Motor neuron (in vitro differentiated cells): ENCODE measurements at regions of chr1 and their contacts with region 1.

Region 1: DNA sequence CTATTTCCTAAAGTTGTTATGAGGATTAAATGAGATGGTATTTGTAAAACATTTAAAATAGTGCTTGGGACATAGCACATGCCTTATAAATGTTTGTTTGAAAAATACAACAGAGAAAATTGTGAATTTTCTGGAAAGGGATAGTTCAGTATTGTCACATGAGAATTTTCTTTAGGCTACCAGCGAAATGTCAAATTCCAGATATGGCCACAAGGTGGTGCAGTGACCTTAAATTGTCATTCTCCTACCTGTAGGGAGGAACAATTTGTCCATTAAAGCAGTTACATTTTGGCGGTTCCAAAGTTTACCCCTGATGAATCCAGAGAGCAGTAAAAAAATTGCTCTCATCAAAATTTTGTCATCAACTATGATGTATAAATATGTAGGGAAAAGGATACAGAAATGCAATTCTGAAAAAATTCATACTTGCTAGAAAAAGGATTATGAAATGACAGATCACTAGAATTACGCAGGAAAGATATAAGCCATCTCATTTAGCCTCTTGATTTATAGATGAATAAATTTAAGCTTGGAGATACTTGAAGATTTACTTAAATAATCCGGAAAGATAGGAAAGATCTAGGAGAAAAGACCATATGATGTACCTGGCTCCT is 50.2 kb upstream of the TSHB start:
- ATAC-seq: peak in 3 of 8 experiments; percentile 21 to 45 (median 35)
- H3K4me3 ChIP-seq: no peak overlapping the region
- H3K27ac ChIP-seq: no peak overlapping the region
- H3K4me1 ChIP-seq: no peaks in the 10 kb centered on the region

Region 2: DNA sequence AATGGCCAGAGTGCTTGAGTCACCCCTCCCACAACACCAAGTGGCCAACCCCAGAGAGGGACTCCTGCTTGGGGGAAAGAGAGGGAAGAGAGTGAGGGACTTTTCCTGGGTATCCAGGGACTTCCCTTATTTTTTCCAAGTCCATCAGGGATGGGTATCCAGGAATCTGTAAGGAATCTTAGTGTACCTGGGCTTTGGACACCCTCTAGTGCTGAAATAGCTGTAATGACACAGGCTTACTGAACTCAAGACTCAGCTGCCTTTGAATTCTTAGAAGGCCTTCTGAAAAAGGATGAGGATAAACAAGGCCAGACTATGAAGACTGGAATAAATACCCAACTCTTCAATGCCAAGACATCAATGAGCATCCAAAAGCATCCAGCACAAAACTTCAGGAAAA is 62.3 kb after region 1 on chr1:
- in situ Hi-C with region 1: loop called in 1 of 9 experiments (anchors 5 kb)
- ATAC-seq: peak in 3 of 8 experiments; percentile 68 to 81 (median 77)
- H3K4me3 ChIP-seq: no peak overlapping the region
- H3K27ac ChIP-seq: no peak overlapping the region
- H3K4me1 ChIP-seq: no peaks in the 10 kb centered on the region

Region 3: GRCh38 chr1:115098979-115099692 is 119.8 kb after region 1 on chr1:
- in situ Hi-C with region 1: loop called in 6 of 9 experiments (anchors 25 kb)
- ATAC-seq: peak in 5 of 8 experiments; percentile 39 to 99 (median 76)
- H3K4me3 ChIP-seq: peak overlapping the region in 1 of 5 donors; percentile 19
- H3K27ac ChIP-seq: no peak overlapping the region
- H3K4me1 ChIP-seq: peaks cover 0 to 7% of the 10 kb centered on the region in 2 donors

Region 4: DNA sequence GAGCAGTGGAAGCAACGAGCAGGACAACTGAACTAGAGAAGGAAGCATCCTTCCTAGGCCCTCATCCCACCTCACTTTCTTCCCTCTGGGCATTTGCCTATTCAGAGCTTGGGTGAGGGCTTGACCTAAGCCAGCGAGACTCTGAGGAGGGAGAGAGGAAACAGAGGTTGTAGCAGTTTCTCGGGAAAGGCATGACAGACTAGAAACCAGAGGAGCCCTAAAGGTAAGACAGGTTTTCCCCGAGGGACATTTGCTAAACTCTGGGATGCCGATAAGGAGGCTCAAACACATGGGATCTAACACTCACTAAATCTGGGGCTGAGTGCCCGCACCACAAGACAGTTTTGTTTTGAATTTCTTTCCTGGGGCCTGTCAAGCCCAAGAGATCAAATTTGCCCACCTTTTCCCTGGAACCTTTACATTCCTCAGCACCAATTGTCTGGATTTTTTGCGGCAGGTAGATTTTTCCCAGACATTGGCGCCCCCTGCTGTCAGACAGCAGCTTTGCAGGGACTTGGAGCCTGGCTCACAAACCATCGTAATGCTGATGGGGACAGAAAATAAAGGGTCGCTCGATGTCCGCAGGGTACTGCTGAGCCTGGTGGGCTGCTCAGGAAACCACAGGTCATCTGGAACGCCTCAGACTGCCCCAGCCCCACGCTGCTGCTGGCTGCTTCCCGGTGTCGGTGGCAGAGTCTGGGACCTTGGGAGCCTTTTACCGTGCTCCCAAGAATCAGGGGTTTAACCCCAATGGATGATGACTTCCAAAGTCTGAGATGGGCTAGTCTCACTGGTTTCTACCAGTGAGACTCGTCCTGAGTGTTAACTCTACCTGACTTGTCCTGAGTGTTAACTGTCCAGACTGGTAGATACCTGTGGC is 133.4 kb after region 1 on chr1:
- in situ Hi-C with region 1: loop called in 6 of 9 experiments (anchors 10 to 25 kb)
- ATAC-seq: peak in 6 of 8 experiments; percentile 25 to 71 (median 49)
- H3K4me3 ChIP-seq: no peak overlapping the region
- H3K27ac ChIP-seq: no peak overlapping the region
- H3K4me1 ChIP-seq: no peaks in the 10 kb centered on the region

Region 5: DNA sequence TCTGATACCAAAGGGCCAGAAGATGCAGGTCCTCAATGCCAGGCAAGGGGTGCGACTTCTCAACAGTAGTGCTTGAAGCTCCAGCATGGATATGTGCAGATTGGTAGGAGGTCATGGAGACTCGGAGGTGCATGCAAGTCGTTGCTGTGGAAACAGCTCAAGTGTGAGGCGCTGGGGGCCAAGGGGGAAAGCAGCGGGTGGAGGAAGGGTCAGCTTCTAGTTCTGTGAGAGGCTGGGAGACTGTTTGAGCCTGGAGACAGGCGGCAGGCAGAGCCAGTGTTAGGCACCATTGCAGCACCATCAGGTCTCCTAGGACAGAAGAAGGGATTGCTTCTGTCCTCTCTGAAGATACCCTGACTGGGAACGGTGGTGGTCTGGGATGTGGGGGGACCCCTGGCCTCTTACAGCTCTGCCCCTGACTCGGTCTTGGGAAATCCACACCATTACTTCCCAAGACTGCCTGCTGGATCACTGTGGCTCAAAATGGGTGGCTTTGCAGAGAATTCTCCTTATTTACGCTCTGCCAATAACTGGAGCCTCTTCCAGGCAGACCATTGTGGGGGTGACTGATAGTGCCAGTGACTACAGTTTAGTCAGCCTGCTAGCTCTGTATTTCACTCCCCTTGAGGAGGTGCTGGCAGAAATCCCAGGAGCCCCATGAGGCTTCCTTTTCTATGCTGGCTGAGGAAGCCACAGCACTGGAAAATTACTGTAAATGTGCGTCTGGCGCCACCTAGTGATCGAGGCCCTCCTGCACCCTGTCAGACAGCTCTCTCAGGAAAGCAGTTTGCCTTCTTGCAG is 616.1 kb after region 1 on chr1:
- in situ Hi-C with region 1: loop called in 1 of 9 experiments (anchors 25 kb)
- ATAC-seq: peak; percentile 97 to 99 (median 99)
- H3K4me3 ChIP-seq: no peak overlapping the region
- H3K27ac ChIP-seq: no peak overlapping the region
- H3K4me1 ChIP-seq: peaks cover 6 to 7% of the 10 kb centered on the region in 2 donors

Region 6: GRCh38 chr1:115793162-115793561 is 813.8 kb after region 1 on chr1:
- in situ Hi-C with region 1: no loop called
- ATAC-seq: no peak
- H3K4me3 ChIP-seq: no peak overlapping the region
- H3K27ac ChIP-seq: no peak overlapping the region
- H3K4me1 ChIP-seq: peaks cover 17 to 46% of the 10 kb centered on the region in 2 donors